ENCODE measurements at regions of chr7 and their contacts with region 1.

Region 1: GRCh38 chr7:149598721-149599306 is 101.2 kb upstream of the ZNF746 start:
- DNase-seq: peak; percentile 80
- H3K4me3 Mint-ChIP-seq: no peak overlapping the region
- H3K27ac Mint-ChIP-seq: peak overlapping the region; percentile 87
- H3K4me1 Mint-ChIP-seq: peaks cover 30% of the 10 kb centered on the region
- H3K27me3 Mint-ChIP-seq: peaks cover 2% of the 10 kb centered on the region

Region 2: GRCh38 chr7:149245244-149245643 is 353.6 kb before region 1 on chr7:
- intact Hi-C with region 1: loop called (anchors 5 kb)
- DNase-seq: no peak
- H3K4me3 Mint-ChIP-seq: peak overlapping the region; percentile 40
- H3K27ac Mint-ChIP-seq: peak overlapping the region; percentile 91
- H3K4me1 Mint-ChIP-seq: peaks cover 51% of the 10 kb centered on the region
- H3K27me3 Mint-ChIP-seq: no peaks in the 10 kb centered on the region

Region 3: GRCh38 chr7:149422129-149422913 is 176.5 kb before region 1 on chr7:
- intact Hi-C with region 1: loop called (anchors 2 kb)
- DNase-seq: peak; percentile 94
- H3K4me3 Mint-ChIP-seq: peak overlapping the region; percentile 79
- H3K27ac Mint-ChIP-seq: peak overlapping the region; percentile 66
- H3K4me1 Mint-ChIP-seq: peaks cover 5% of the 10 kb centered on the region
- H3K27me3 Mint-ChIP-seq: peaks cover 6% of the 10 kb centered on the region

Region 4: GRCh38 chr7:149586646-149587332 is 12.0 kb before region 1 on chr7:
- intact Hi-C with region 1: loop called (anchors 1 kb)
- DNase-seq: no peak
- H3K4me3 Mint-ChIP-seq: no peak overlapping the region
- H3K27ac Mint-ChIP-seq: no peak overlapping the region
- H3K4me1 Mint-ChIP-seq: peaks cover 5% of the 10 kb centered on the region
- H3K27me3 Mint-ChIP-seq: no peaks in the 10 kb centered on the region

Measured in activated CD4-positive, alpha-beta T cell treated with anti-CD3 and anti-CD28 coated beads, Interleukin-2, amount 10 ng/mL, durations not matched to agents 24 days and 14 days (primary cell).